Left lung (tissue), 14 donors: ENCODE measurements at regions of chr12 and their contacts with region 1.

Region 1: GRCh38 chr12:50839042-50839441 is 3.7 kb upstream of the TMPRSS12 start:
- DNase-seq: no peak
- ATAC-seq: no peak
- H3K4me3 ChIP-seq: no peak overlapping the region
- H3K27ac ChIP-seq: no peak overlapping the region
- H3K4me1 ChIP-seq: no peaks in the 10 kb centered on the region
- H3K27me3 ChIP-seq: peaks cover 0 to 10% of the 10 kb centered on the region in 2 donors
- CTCF ChIP-seq: no peak

Region 2: GRCh38 chr12:50482566-50482965 is 356.5 kb before region 1 on chr12:
- intact Hi-C with region 1: no loop called
- DNase-seq: no peak
- ATAC-seq: no peak
- H3K4me3 ChIP-seq: no peak overlapping the region
- H3K27ac ChIP-seq: no peak overlapping the region
- H3K4me1 ChIP-seq: no peaks in the 10 kb centered on the region
- H3K27me3 ChIP-seq: no peaks in the 10 kb centered on the region
- CTCF ChIP-seq: no peak

Region 3: DNA sequence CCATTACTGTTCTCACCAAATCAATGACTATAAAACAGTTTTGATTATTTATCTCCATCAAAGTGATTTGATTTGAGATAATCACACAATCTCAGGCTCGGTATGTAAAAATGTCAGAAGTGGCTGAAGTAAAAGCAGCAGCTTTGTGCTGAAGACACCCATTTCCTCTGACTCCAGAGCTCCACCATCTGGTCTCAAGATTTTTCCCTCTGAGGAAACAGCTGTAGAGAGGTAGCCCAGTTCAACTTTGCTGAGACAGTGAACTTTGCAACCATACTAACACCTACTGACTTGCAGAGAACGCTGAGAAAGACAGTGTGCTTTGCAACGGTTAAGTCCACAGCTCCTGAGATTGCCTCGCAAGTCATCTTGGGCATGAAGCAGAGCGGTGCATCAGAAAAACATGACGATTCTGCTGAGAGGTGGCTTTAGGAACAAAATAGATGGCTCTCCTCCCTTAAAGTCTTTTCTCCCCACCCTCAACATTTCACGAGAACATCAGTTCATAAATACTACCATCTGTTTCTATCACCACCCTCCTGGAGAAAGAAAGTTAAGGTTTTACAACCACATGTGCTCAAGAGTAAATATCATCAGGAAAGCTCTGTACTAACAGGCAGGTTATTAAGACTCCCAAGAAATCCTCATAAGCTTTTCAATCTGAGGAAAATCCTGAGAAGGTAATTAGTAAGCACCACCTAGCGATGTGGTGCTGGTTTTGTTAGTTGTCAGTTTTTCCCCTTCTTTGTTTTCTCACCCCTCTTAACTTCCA is 148.1 kb after region 1 on chr12:
- intact Hi-C with region 1: loop called in 1 of 2 experiments (anchors 10 kb)
- DNase-seq: peak in 2 of 4 donors; percentile 57 to 77
- ATAC-seq: peak; percentile 85
- H3K4me3 ChIP-seq: no peak overlapping the region
- H3K27ac ChIP-seq: peak overlapping the region in 1 of 2 donors; percentile 21
- H3K4me1 ChIP-seq: peaks cover 13 to 25% of the 10 kb centered on the region in 2 donors
- H3K27me3 ChIP-seq: no peaks in the 10 kb centered on the region
- CTCF ChIP-seq: peak in 1 of 2 donors; percentile 35